ENCODE measurements at regions of chr7 and their contacts with region 1.

Region 1: GRCh38 chr7:97027427-97028234 is 3.0 kb upstream of the DLX5 start:
- DNase-seq: peak; percentile 71
- H3K4me3 ChIP-seq: no peak overlapping the region
- H3K27ac ChIP-seq: no peak overlapping the region
- H3K4me1 ChIP-seq: no peaks in the 10 kb centered on the region
- CTCF ChIP-seq: peak; percentile 87

Region 2: GRCh38 chr7:95916573-95917297 is 1110.9 kb before region 1 on chr7:
- CTCF ChIA-PET with region 1: interaction called, 3 read pairs
- POLR2A ChIA-PET with region 1: no interaction called
- intact Hi-C with region 1: loop called (anchors 1 kb)
- DNase-seq: peak; percentile 70
- H3K4me3 ChIP-seq: no peak overlapping the region
- H3K27ac ChIP-seq: no peak overlapping the region
- H3K4me1 ChIP-seq: no peaks in the 10 kb centered on the region
- CTCF ChIP-seq: peak; percentile 98

Region 3: GRCh38 chr7:96075510-96076349 is 951.9 kb before region 1 on chr7:
- CTCF ChIA-PET with region 1: no interaction called
- POLR2A ChIA-PET with region 1: no interaction called
- intact Hi-C with region 1: loop called (anchors 2 kb)
- DNase-seq: peak; percentile 25
- H3K4me3 ChIP-seq: no peak overlapping the region
- H3K27ac ChIP-seq: no peak overlapping the region
- H3K4me1 ChIP-seq: no peaks in the 10 kb centered on the region
- CTCF ChIP-seq: peak; percentile 71

Region 4: DNA sequence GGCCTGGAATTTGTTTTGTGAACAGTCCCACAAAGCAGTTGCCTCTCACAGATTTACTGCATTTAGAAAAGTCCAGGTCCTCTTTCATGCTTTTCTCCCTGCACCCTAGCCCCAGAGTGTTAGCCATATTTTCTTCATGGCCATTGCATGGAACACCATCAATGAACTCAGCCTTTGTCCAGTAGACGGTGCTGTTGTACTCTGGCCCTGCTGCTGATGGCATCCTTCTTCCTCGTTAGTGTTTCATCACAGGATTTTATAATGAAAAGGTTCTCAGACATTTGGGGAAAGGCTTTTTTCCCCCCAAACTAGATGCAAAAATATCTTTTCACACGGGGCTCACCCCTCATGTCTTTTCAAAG is 612.7 kb before region 1 on chr7:
- CTCF ChIA-PET with region 1: no interaction called
- POLR2A ChIA-PET with region 1: no interaction called
- intact Hi-C with region 1: loop called (anchors 1 kb)
- DNase-seq: peak; percentile 53
- H3K4me3 ChIP-seq: no peak overlapping the region
- H3K27ac ChIP-seq: no peak overlapping the region
- H3K4me1 ChIP-seq: peaks cover 18% of the 10 kb centered on the region
- CTCF ChIP-seq: peak; percentile 79